ENCODE measurements at regions of chrX and their contacts with region 1.

Region 1: GRCh38 chrX:153599192-153600031 is 473 bp upstream of the CCNQ start:
- DNase-seq: peak; percentile 89 to 96 (median 96)
- ATAC-seq: peak; percentile 96 to 97
- H3K4me3 ChIP-seq: peak overlapping the region; percentile 80
- H3K27ac ChIP-seq: peak overlapping the region; percentile 89
- H3K4me1 ChIP-seq: no peaks in the 10 kb centered on the region
- H3K27me3 ChIP-seq: no peaks in the 10 kb centered on the region

Region 2: DNA sequence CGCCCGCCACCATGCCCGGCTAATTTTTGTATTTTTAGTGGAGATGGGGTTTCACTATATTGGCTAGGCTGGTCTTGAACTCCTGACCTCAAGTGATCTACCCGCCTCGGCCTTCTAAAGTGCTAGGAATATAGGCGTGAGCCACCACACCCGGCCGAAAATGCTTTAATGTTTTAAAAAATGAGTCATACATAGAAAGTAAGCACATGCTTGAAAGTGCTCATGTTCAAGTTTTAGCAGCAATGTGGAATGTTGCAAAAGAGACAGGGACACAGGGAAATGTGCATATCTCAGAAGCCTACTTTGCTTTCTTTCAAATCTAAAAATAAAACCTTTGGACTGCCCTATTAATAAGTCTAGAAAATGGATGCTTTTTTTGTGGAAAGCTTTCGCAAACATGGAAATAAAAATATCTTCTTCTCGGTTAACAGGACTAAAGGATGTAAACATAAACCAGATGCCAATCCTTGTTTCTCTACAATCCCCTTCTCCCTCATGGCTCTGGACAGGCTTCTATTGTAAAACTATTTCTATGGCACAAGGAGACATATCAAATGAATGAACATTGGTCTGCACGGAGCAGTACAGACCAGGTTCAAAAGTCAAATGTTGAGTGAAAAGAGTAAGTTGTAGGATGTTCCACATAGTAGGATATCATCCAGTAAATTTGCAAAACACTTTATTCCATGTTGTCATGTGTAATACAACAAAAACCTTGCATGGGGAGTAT is 483.1 kb after region 1 on chrX:
- intact Hi-C with region 1: loop called in 1 of 4 experiments (anchors 10 kb)
- DNase-seq: no peak
- ATAC-seq: peak in 1 of 2 donors; percentile 30
- H3K4me3 ChIP-seq: no peak overlapping the region
- H3K27ac ChIP-seq: no peak overlapping the region
- H3K4me1 ChIP-seq: peaks cover 5% of the 10 kb centered on the region
- H3K27me3 ChIP-seq: no peaks in the 10 kb centered on the region

Measured in right cardiac atrium (tissue), 5 donors.